ENCODE measurements at regions of chr5 and their contacts with region 1.

Region 1: GRCh38 chr5:154723740-154724505 is 31.3 kb upstream of the LARP1 start:
- DNase-seq: no peak
- H3K4me3 ChIP-seq: no peak overlapping the region
- H3K27ac ChIP-seq: no peak overlapping the region
- H3K4me1 ChIP-seq: no peaks in the 10 kb centered on the region
- H3K27me3 ChIP-seq: no peaks in the 10 kb centered on the region
- CTCF ChIP-seq: no peak

Region 2: GRCh38 chr5:154334406-154335064 is 389.4 kb before region 1 on chr5:
- CTCF ChIA-PET with region 1: no interaction called
- POLR2A ChIA-PET with region 1: no interaction called
- intact Hi-C with region 1: loop called (anchors 5 kb)
- DNase-seq: no peak
- H3K4me3 ChIP-seq: no peak overlapping the region
- H3K27ac ChIP-seq: no peak overlapping the region
- H3K4me1 ChIP-seq: no peaks in the 10 kb centered on the region
- H3K27me3 ChIP-seq: no peaks in the 10 kb centered on the region
- CTCF ChIP-seq: no peak

Region 3: DNA sequence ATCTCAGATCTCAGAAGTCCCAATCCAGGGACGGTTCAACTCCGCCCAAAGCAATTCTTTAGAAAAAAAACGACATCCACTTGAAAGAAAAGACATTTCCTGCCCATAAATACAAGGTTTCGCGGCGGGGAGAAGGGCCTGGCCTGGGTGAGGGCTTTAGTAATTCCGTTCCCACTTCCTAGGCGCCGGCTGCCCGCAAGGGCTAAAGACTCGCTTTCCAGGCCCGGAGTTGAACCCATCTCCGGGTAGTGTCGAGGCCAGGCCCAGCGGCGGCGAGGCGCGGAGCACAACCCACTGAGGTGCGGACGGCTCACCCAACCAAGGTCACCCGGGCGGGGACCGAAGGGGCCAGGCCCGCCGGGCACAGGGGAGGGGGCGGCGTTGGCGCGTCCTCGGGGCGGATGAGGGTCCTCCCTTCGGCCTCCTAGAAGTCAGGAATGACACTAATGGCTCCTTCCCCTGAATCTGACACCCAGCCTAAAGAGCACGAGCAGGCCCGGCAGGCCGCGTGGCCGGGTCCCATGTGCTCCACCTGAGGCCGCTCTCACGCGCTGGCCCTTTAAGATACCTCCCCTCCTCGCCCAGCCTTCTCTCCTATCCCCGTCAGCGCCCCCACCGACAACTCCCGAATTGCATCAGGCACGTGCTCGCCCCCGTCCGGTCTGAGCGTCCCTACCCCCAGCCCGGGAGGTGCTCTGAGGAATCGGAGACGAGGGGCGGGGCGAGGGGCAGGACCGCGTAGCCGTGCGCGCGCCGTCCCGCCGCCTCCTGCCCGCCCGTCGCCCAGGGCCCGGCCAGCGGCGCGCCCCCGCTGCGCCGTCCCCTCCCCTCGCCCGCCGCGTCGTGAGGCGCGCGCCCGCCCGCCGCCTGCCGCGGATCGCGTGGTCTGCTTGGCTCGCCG is 30.8 kb after region 1 on chr5:
- CTCF ChIA-PET with region 1: no interaction called
- POLR2A ChIA-PET with region 1: no interaction called
- intact Hi-C with region 1: no loop called
- DNase-seq: peak; percentile 96 to 100
- H3K4me3 ChIP-seq: peak overlapping the region; percentile 77
- H3K27ac ChIP-seq: peak overlapping the region; percentile 95
- H3K4me1 ChIP-seq: peaks cover 33% of the 10 kb centered on the region
- H3K27me3 ChIP-seq: no peaks in the 10 kb centered on the region
- CTCF ChIP-seq: no peak; the same call in 1 of the 2 replicates

Region 4: DNA sequence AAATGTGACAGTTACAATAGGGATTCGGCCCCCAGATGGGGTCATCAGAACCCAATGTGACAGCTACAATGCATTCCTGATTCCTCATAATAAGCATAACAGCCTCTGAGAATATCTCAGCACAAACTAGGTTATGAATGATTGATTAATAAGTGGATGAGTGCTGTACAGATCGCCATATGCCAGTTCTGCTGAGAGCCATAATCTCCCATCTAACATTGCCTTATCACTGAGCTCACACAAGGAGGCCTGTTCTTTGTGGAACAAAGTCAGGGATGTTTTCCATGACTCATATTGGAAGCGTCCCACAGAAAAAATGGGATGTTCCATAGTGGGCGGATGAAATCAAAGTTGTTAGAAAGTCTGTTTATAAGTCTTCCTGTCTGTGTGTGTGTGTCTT is 379.2 kb after region 1 on chr5:
- CTCF ChIA-PET with region 1: no interaction called
- POLR2A ChIA-PET with region 1: no interaction called
- intact Hi-C with region 1: no loop called
- DNase-seq: no peak
- H3K4me3 ChIP-seq: no peak overlapping the region
- H3K27ac ChIP-seq: no peak overlapping the region
- H3K4me1 ChIP-seq: no peaks in the 10 kb centered on the region
- H3K27me3 ChIP-seq: peaks cover 89% of the 10 kb centered on the region
- CTCF ChIP-seq: no peak